T-cell (primary cell): ENCODE measurements at regions of chr5 and their contacts with region 1.

Region 1: DNA sequence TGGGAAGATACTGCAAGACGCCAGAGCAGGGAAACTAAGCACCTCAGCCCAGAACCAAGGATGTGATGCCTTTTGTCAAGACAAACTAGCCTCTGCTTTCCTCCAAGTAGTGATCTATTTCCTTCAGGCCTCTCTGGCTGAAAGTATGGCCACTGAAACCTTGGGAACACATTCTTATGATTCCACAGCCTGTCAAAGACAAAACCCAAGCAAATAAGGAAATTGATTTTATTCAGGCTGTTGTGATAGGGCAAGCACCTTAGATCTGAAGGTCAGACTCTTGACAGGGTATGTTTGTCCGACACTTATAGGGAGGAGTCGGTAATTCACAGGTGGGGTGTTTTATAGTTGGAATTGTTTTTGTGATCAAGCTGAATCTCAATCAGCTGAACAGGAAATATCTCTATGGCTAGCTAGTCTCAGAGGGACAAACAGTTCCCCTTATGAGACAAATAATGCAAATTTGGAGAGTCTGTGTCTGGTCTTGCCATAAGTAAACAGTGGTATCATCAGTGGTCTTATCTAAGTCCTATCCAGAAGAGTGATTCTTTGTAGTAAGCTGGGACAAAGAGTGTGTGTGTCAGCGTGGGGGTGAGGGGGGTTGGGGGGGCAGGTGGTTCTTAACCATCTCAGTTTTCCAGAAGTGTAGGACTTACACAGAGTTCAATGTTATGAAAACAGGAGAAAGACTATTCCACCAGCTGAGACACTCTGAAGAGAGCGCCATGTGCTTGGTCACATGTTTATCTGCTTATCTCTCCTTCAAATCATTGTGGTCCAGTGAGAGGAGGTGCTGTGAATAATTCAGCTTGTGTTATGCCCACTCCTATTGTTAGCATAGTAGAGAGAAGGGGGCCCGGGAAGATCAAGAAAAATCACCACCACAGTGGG is 6.7 kb upstream of the ZCCHC10 start:
- DNase-seq: peak in 1 of 35 experiments; percentile 37
- ATAC-seq: peak in 2 of 4 experiments; percentile 31 to 62
- H3K4me3 ChIP-seq: no peak overlapping the region
- H3K4me3 Mint-ChIP-seq: no peak overlapping the region
- H3K27ac ChIP-seq: no peak overlapping the region
- H3K27ac Mint-ChIP-seq: no peak overlapping the region
- H3K4me1 ChIP-seq: no peaks in the 10 kb centered on the region
- H3K4me1 Mint-ChIP-seq: peaks cover 0 to 14% (median 0%) of the 10 kb centered on the region in 3 donors
- H3K27me3 ChIP-seq: peaks cover 0 to 4% of the 10 kb centered on the region in 2 experiments
- H3K27me3 Mint-ChIP-seq: peaks cover 2 to 7% of the 10 kb centered on the region in 2 donors

Region 2: GRCh38 chr5:132883261-132883834 is 149.7 kb before region 1 on chr5:
- CTCF ChIA-PET with region 1: no interaction called
- POLR2A ChIA-PET with region 1: interaction called in 1 of 2 experiments, 15 read pairs
- DNase-seq: peak in 14 of 35 experiments; percentile 5 to 63 (median 12)
- ATAC-seq: peak in 3 of 4 experiments; percentile 52 to 63 (median 58)
- H3K4me3 ChIP-seq: no peak overlapping the region
- H3K4me3 Mint-ChIP-seq: no peak overlapping the region
- H3K27ac ChIP-seq: no peak overlapping the region
- H3K27ac Mint-ChIP-seq: peak overlapping the region in 1 of 2 donors; percentile 1
- H3K4me1 ChIP-seq: no peaks in the 10 kb centered on the region
- H3K4me1 Mint-ChIP-seq: no peaks in the 10 kb centered on the region
- H3K27me3 ChIP-seq: no peaks in the 10 kb centered on the region
- H3K27me3 Mint-ChIP-seq: no peaks in the 10 kb centered on the region

Region 3: DNA sequence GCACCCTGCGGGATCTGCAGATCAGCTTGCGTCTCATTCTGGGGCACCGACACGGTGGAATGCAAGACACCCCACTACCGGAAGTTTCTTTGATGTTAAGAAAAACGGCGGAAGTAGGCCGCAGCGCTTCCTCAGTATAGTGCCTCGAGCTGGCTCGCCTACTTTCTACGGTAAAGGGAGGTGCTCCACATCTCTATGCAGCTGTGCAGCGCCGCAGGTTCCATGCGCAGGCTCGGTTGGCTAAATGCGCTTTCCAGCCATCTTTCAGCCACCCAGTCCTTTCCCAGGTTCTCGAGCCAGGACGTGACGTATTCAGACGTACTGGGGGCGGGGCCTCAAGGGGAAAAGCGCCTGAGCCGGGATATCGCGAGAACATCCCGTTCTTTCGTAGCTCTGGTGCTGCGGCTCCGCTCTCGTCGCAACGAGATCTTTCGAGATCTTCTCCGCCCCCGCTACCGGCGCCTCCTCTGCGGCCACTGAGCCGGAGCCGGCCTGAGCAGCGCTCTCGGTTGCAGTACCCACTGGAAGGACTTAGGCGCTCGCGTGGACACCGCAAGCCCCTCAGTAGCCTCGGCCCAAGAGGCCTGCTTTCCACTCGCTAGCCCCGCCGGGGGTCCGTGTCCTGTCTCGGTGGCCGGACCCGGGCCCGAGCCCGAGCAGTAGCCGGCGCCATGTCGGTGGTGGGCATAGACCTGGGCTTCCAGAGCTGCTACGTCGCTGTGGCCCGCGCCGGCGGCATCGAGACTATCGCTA is 18.7 kb after region 1 on chr5 and contains the start of gene HSPA4:
- CTCF ChIA-PET with region 1: no interaction called
- POLR2A ChIA-PET with region 1: interaction called in 1 of 2 experiments, 10 read pairs
- DNase-seq: peak; percentile 92 to 100 (median 97)
- ATAC-seq: peak; percentile 87 to 89 (median 88)
- H3K4me3 ChIP-seq: peak within 1 kb of the TSS; percentile 79 to 89
- H3K4me3 Mint-ChIP-seq: peak within 1 kb of the TSS; percentile 95 to 97 (median 96)
- H3K27ac ChIP-seq: peak within 1 kb of the TSS; percentile 100
- H3K27ac Mint-ChIP-seq: peak within 1 kb of the TSS; percentile 98 to 100
- H3K4me1 ChIP-seq: peaks cover 20 to 44% of the 10 kb centered on the region in 2 experiments
- H3K4me1 Mint-ChIP-seq: peaks cover 58 to 63% (median 61%) of the 10 kb centered on the region in 3 donors
- H3K27me3 ChIP-seq: peaks cover 0 to 3% of the 10 kb centered on the region in 2 experiments
- H3K27me3 Mint-ChIP-seq: no peaks in the 10 kb centered on the region
- total RNA-seq, gene HSPA4: 47.0 to 55.3 (median 48.1) TPM

Region 4: DNA sequence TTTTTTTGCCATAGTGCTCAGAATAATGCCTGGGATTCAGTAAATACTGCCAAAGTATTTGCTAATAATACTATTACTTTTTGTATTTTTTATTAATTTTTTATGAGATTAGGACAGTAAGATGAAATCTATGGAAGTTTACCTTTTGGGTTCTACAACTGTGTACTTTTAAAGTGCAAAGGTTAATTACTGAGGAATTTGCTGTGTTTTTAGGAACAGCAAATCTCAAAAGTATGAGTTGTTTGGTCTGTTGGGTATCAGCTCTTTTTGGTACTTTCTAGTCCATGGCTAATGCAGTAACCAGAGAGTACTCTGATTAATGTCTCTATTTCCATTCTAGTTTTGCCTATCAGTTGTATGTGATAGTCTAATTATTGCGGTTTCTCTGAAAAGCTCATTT is 23.8 kb after region 1 on chr5:
- CTCF ChIA-PET with region 1: no interaction called
- POLR2A ChIA-PET with region 1: interaction called in 1 of 2 experiments, 10 read pairs
- DNase-seq: no peak
- ATAC-seq: no peak
- H3K4me3 ChIP-seq: no peak overlapping the region
- H3K4me3 Mint-ChIP-seq: no peak overlapping the region
- H3K27ac ChIP-seq: no peak overlapping the region
- H3K27ac Mint-ChIP-seq: no peak overlapping the region
- H3K4me1 ChIP-seq: peaks cover 11 to 57% of the 10 kb centered on the region in 2 experiments
- H3K4me1 Mint-ChIP-seq: peaks cover 71 to 76% (median 74%) of the 10 kb centered on the region in 3 donors
- H3K27me3 ChIP-seq: no peaks in the 10 kb centered on the region
- H3K27me3 Mint-ChIP-seq: no peaks in the 10 kb centered on the region